ENCODE measurements at regions of chr14 and their contacts with region 1.

Region 1: DNA sequence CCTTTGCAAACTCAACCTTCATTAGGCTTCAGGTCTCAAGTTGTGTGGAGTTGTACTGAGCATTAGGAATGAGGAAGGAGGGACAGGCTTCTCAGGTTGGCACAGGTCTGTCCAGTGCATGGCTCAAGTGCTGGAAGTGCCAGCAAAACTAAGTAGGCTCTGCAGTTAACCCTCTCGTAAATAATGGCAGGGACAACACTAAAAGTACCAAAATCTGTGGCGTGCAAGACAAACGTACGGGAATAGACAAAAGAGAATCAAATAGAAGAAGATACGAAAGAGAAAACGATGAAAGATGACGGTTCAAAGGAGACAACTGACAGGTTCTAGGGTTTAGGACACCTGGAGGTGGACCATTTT is 612 bp downstream of the TRAPPC6B start:
- DNase-seq: no peak
- ATAC-seq: peak; percentile 4
- H3K4me3 Mint-ChIP-seq: peak overlapping the region; percentile 82
- H3K27ac Mint-ChIP-seq: peak overlapping the region; percentile 98
- H3K4me1 Mint-ChIP-seq: peaks cover 44% of the 10 kb centered on the region
- H3K27me3 Mint-ChIP-seq: no peaks in the 10 kb centered on the region

Region 2: GRCh38 chr14:39102969-39103957 is 66.3 kb before region 1 on chr14 and contains the start of gene SEC23A:
- CTCF ChIA-PET with region 1: interaction called, 4 read pairs
- POLR2A ChIA-PET with region 1: interaction called, 24 read pairs
- DNase-seq: peak; percentile 88
- ATAC-seq: peak; percentile 95
- H3K4me3 Mint-ChIP-seq: peak within 1 kb of the TSS; percentile 96
- H3K27ac Mint-ChIP-seq: peak within 1 kb of the TSS; percentile 97
- H3K4me1 Mint-ChIP-seq: peaks cover 50% of the 10 kb centered on the region
- H3K27me3 Mint-ChIP-seq: no peaks in the 10 kb centered on the region
- total RNA-seq, gene SEC23A: 48.2 to 50.2 TPM

Region 3: GRCh38 chr14:39114073-39114838 is 55.3 kb before region 1 on chr14 and contains the start of gene GEMIN2:
- CTCF ChIA-PET with region 1: interaction called, 7 read pairs
- POLR2A ChIA-PET with region 1: interaction called, 13 read pairs
- DNase-seq: peak; percentile 96
- ATAC-seq: peak; percentile 99
- H3K4me3 Mint-ChIP-seq: peak within 1 kb of the TSS; percentile 95
- H3K27ac Mint-ChIP-seq: peak within 1 kb of the TSS; percentile 92
- H3K4me1 Mint-ChIP-seq: peaks cover 35% of the 10 kb centered on the region
- H3K27me3 Mint-ChIP-seq: peaks cover 2% of the 10 kb centered on the region
- total RNA-seq, gene GEMIN2: 25.4 to 26.7 TPM

Region 4: DNA sequence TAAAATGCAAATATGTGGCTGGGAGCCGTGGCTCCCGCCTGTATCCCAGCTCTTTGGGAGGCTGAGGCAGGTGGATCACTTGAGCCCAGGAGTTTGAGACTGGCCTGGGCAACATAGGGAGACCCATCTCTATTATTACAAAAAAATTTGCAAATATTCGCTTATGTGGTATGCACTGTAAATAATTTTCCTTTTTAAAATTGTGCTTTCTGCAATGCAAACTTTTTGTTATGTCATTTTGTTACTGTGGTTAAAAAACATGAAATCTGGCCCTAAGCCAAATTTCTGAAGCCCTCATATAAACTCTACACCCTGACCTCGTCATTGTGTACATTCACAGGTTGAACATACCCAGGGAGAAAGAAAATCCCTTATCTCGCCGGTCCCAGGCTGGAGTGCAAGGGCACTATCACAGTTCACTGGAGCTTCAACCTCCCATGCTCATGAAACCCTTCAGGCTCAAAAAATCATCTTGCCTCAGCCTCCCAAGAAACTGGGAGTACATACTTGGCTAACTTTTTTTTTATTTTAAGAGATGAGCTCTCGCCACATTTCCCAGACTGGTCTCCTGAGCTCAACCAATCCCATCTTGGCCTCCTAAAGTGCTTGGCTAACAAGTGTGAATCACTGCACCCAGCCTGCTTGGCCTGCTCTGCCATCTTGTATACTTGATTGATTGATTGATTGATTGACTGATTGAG is 24.1 kb before region 1 on chr14:
- CTCF ChIA-PET with region 1: no interaction called
- POLR2A ChIA-PET with region 1: interaction called, 10 read pairs
- DNase-seq: no peak
- ATAC-seq: no peak
- H3K4me3 Mint-ChIP-seq: no peak overlapping the region
- H3K27ac Mint-ChIP-seq: no peak overlapping the region
- H3K4me1 Mint-ChIP-seq: no peaks in the 10 kb centered on the region
- H3K27me3 Mint-ChIP-seq: no peaks in the 10 kb centered on the region

Region 5: GRCh38 chr14:39157491-39157890 is 12.0 kb before region 1 on chr14:
- CTCF ChIA-PET with region 1: interaction called, 3 read pairs
- POLR2A ChIA-PET with region 1: interaction called, 20 read pairs
- DNase-seq: no peak
- ATAC-seq: no peak
- H3K4me3 Mint-ChIP-seq: no peak overlapping the region
- H3K27ac Mint-ChIP-seq: no peak overlapping the region
- H3K4me1 Mint-ChIP-seq: peaks cover 18% of the 10 kb centered on the region
- H3K27me3 Mint-ChIP-seq: no peaks in the 10 kb centered on the region

Region 6: GRCh38 chr14:39266871-39267591 is 97.5 kb after region 1 on chr14:
- CTCF ChIA-PET with region 1: no interaction called
- POLR2A ChIA-PET with region 1: interaction called, 17 read pairs
- DNase-seq: peak; percentile 83
- ATAC-seq: peak; percentile 86
- H3K4me3 Mint-ChIP-seq: peak overlapping the region; percentile 93
- H3K27ac Mint-ChIP-seq: peak overlapping the region; percentile 97
- H3K4me1 Mint-ChIP-seq: peaks cover 54% of the 10 kb centered on the region
- H3K27me3 Mint-ChIP-seq: no peaks in the 10 kb centered on the region

Region 7: GRCh38 chr14:39376667-39377403 is 207.3 kb after region 1 on chr14:
- CTCF ChIA-PET with region 1: no interaction called
- POLR2A ChIA-PET with region 1: no interaction called
- DNase-seq: no peak
- ATAC-seq: no peak
- H3K4me3 Mint-ChIP-seq: no peak overlapping the region
- H3K27ac Mint-ChIP-seq: no peak overlapping the region
- H3K4me1 Mint-ChIP-seq: peaks cover 8% of the 10 kb centered on the region
- H3K27me3 Mint-ChIP-seq: no peaks in the 10 kb centered on the region

Measured in activated CD8-positive, alpha-beta T cell treated with anti-CD3 and anti-CD28 coated beads, Interleukin-2, amount 10 ng/mL, durations not matched to agents 7 days and 5 days (primary cell).